ENCODE measurements at regions of chr20 and their contacts with region 1.

Region 1: GRCh38 chr20:45318948-45319347 is 10.8 kb upstream of the MATN4 start:
- DNase-seq: peak in 1 of 4 donors; percentile 31
- ATAC-seq: peak; percentile 4
- H3K4me3 ChIP-seq: no peak overlapping the region
- H3K27ac ChIP-seq: peak overlapping the region; percentile 39 to 74 (median 54)
- H3K4me1 ChIP-seq: peaks cover 65% of the 10 kb centered on the region
- H3K27me3 ChIP-seq: no peaks in the 10 kb centered on the region
- CTCF ChIP-seq: no peak
- POLR2A ChIP-seq: peak in 1 of 3 donors; percentile 51

Region 2: GRCh38 chr20:45444050-45444449 is 125.1 kb after region 1 on chr20:
- intact Hi-C with region 1: loop called (anchors 5 kb)
- DNase-seq: no peak
- ATAC-seq: no peak
- H3K4me3 ChIP-seq: no peak overlapping the region
- H3K27ac ChIP-seq: no peak overlapping the region
- H3K4me1 ChIP-seq: no peaks in the 10 kb centered on the region
- H3K27me3 ChIP-seq: no peaks in the 10 kb centered on the region
- CTCF ChIP-seq: no peak
- POLR2A ChIP-seq: no peak

Measured in body of pancreas (tissue), 4 donors.